ENCODE measurements at regions of chr9 and their contacts with region 1.

Region 1: DNA sequence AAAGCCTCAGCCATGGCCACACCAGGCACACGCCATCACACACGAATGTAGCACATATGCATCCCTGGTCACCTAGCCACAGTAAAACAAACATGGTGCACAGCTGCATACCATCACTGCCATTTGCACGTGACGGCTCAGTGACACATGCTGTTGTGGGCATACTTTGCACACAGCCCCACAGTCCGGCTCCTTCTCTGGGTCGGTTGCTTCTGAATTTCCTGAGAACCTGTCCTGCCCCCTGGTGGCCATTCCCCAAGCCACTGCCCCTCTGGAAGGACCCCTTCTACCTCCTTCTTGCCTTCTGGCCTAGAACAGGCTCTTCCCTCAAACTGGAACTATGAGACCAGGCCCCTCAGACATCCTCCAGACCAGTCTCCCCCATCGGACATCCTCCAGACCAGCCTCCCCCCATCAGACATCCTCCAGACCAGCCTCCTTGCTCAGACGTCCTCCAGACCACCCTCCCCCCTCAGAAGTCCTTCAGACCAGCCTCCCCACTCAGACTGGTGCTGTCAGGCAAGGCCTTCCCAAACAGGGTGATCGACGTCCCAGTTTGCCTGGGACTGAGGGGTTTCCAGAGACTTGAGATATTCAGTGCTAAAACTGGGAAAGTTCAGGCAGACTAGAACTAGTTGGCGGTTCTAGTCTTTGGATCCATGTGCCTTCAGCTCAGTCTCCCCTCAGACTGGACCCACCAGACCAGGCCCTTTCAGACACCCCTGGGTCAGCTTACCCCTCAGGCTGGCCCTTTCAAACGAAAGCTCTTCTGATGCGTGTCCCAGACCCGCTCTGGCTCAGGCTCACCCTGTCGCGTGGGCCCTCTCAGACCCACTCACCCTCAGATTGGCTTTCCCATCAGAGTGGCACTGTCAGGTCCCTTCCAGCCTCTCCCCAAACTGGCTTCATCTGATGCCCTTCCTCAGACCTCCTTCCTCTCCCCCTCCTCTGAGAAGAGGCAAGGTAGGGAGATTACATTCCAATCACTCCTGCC is 24.3 kb upstream of the ENHO start:
- DNase-seq: peak; percentile 65
- H3K4me3 ChIP-seq: peak overlapping the region in 1 of 2 experiments; percentile 40; a peak in 1 of 4 replicates
- H3K27ac ChIP-seq: peak overlapping the region in 1 of 2 experiments; percentile 74; a peak in 2 of 4 replicates
- H3K4me1 ChIP-seq: peaks cover 0 to 37% of the 10 kb centered on the region in 2 experiments; a peak in 1 of 4 replicates
- H3K27me3 ChIP-seq: peaks cover 5% of the 10 kb centered on the region; the same call in 1 of the 2 replicates
- CTCF ChIP-seq: peak; percentile 79
- EP300 ChIP-seq: no peak
- RAD21 ChIP-seq: peak; percentile 67

Region 2: GRCh38 chr9:34403554-34404380 is 143.4 kb before region 1 on chr9:
- CTCF ChIA-PET with region 1: interaction called, 49 read pairs
- POLR2A ChIA-PET with region 1: no interaction called
- DNase-seq: peak; percentile 78
- H3K4me3 ChIP-seq: peak overlapping the region in 1 of 2 experiments; percentile 44; a peak in 1 of 4 replicates
- H3K27ac ChIP-seq: no peak overlapping the region
- H3K4me1 ChIP-seq: peaks cover 0 to 12% of the 10 kb centered on the region in 2 experiments; a peak in 1 of 4 replicates
- H3K27me3 ChIP-seq: no peaks in the 10 kb centered on the region
- CTCF ChIP-seq: peak; percentile 99
- EP300 ChIP-seq: no peak
- RAD21 ChIP-seq: peak; percentile 99

Region 3: DNA sequence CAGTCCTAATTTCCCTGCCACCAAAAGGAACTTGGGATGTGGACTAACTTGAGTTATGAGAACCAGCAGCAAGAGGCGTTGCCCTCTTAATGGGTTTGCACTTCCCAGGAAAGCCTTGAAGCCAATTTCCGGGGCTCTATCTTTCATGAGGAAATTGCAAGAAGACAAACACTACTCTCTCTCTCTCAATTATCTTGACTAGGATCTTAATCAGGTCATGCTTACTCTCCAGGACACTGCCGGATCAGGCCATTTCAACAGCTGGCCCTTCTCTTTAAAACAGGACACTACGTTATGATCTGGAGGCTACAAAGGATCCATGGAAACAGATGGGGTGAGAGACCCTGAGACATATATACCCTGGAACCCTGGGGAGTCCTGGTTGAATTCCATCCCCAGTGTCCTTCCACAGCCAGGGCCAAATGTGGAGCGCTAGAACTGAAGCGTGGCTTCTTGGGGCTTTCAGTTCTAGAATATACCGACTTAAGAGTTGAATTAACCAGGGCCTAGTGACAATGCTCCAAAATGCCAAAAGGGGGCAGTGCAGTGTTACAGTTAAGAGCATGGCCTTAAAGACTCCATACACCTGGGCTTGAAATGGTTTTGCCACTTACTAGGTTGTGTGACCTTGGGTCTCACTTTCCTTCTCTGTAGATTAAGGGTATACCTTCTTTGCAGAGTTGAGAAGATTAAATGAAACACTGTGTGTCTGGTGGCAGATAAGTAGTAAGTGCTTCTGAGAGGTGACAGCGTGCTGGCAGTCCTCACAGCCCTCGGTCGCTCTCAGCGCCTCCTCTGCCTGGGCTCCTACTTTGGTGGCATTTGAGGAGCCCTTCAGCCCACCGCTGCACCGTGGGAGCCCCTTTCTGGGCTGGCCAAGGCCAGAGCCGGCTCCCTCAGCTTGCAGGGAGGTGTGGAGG is 109.9 kb before region 1 on chr9:
- CTCF ChIA-PET with region 1: interaction called, 27 read pairs
- POLR2A ChIA-PET with region 1: interaction called, 3 read pairs
- DNase-seq: peak; percentile 74
- H3K4me3 ChIP-seq: no peak overlapping the region
- H3K27ac ChIP-seq: peak overlapping the region in 1 of 2 experiments; percentile 59; a peak in 2 of 4 replicates
- H3K4me1 ChIP-seq: peaks cover 12 to 21% of the 10 kb centered on the region in 2 experiments; a peak in 3 of 4 replicates
- H3K27me3 ChIP-seq: no peaks in the 10 kb centered on the region
- CTCF ChIP-seq: peak; percentile 92
- EP300 ChIP-seq: no peak
- RAD21 ChIP-seq: peak; percentile 94

Region 4: GRCh38 chr9:34458013-34458958 is 88.8 kb before region 1 on chr9 and contains the starts of genes DNAI1 and FAM219A:
- CTCF ChIA-PET with region 1: interaction called, 13 read pairs
- POLR2A ChIA-PET with region 1: no interaction called
- DNase-seq: peak; percentile 99
- H3K4me3 ChIP-seq: peak within 1 kb of the TSS; percentile 76 to 77
- H3K27ac ChIP-seq: peak within 1 kb of the TSS; percentile 61 to 82
- H3K4me1 ChIP-seq: peaks cover 20 to 21% of the 10 kb centered on the region in 2 experiments; a peak in 2 of 4 replicates
- H3K27me3 ChIP-seq: no peaks in the 10 kb centered on the region
- CTCF ChIP-seq: no peak
- EP300 ChIP-seq: no peak
- RAD21 ChIP-seq: no peak
- polyA plus RNA-seq, gene DNAI1: 0.46 and 0.55 TPM in 2 replicates
- polyA plus RNA-seq, gene FAM219A: 15.7 and 18.5 TPM in 2 replicates

Region 5: DNA sequence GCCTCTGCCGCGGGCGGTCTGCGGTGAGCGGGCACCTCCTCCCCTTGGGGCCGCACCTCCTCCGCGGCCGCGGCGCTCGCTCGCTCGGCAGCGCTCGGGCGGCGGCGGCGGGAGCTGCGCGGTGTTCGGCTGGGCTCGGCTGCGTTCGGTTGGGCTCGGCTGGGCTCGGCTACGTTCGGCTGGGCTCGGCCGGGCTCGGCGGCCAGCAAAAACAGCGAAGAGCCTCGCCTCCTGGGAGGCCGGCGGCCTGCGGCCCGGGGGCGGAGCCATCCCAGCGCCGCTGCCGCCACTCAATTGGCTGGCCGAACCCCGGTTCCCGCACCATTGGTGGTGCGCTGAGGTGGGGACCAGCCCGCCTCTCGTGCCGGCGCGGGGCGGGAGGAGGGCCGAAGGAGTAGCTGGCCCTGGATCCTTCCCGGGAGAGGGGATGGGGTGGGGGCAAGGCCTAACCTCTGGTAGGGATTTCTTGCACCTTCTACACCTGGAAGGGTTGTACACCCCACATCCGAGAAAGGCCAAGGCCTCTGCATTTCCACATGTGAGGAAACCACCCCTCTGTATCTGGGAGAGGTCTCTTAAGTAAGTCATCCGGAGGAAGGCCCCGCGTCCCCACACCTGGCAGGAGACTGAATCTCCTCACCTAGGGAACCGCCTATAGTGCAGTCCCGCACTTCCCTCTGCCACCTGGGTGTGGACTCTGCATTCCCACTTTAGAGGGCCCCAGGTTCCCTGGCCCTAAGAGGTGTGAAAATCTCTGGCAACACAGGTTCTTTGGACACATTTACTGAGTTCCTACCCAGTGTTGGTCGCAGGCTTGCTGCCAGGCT is 23.9 kb before region 1 on chr9 and contains the start of gene ENHO:
- CTCF ChIA-PET with region 1: interaction called, 26 read pairs
- POLR2A ChIA-PET with region 1: no interaction called
- DNase-seq: peak; percentile 99
- H3K4me3 ChIP-seq: peak within 1 kb of the TSS; percentile 50 to 53
- H3K27ac ChIP-seq: peak within 1 kb of the TSS in 1 of 2 experiments; percentile 36; a peak in 1 of 4 replicates
- H3K4me1 ChIP-seq: peaks cover 0 to 15% of the 10 kb centered on the region in 2 experiments; a peak in 1 of 4 replicates
- H3K27me3 ChIP-seq: no peaks in the 10 kb centered on the region
- CTCF ChIP-seq: no peak
- EP300 ChIP-seq: no peak
- RAD21 ChIP-seq: no peak
- polyA plus RNA-seq, gene ENHO: 1.2 and 1.5 TPM in 2 replicates

Region 6: GRCh38 chr9:34578241-34579103 is 31.3 kb after region 1 on chr9:
- CTCF ChIA-PET with region 1: interaction called, 129 read pairs
- POLR2A ChIA-PET with region 1: no interaction called
- DNase-seq: peak; percentile 85
- H3K4me3 ChIP-seq: peak overlapping the region; percentile 26 to 35; a peak in 3 of 4 replicates
- H3K27ac ChIP-seq: peak overlapping the region in 1 of 2 experiments; percentile 75; a peak in 2 of 4 replicates
- H3K4me1 ChIP-seq: peaks cover 0 to 86% of the 10 kb centered on the region in 2 experiments; a peak in 2 of 4 replicates
- H3K27me3 ChIP-seq: peaks cover 33% of the 10 kb centered on the region
- CTCF ChIP-seq: no peak
- EP300 ChIP-seq: no peak
- RAD21 ChIP-seq: no peak

Region 7: DNA sequence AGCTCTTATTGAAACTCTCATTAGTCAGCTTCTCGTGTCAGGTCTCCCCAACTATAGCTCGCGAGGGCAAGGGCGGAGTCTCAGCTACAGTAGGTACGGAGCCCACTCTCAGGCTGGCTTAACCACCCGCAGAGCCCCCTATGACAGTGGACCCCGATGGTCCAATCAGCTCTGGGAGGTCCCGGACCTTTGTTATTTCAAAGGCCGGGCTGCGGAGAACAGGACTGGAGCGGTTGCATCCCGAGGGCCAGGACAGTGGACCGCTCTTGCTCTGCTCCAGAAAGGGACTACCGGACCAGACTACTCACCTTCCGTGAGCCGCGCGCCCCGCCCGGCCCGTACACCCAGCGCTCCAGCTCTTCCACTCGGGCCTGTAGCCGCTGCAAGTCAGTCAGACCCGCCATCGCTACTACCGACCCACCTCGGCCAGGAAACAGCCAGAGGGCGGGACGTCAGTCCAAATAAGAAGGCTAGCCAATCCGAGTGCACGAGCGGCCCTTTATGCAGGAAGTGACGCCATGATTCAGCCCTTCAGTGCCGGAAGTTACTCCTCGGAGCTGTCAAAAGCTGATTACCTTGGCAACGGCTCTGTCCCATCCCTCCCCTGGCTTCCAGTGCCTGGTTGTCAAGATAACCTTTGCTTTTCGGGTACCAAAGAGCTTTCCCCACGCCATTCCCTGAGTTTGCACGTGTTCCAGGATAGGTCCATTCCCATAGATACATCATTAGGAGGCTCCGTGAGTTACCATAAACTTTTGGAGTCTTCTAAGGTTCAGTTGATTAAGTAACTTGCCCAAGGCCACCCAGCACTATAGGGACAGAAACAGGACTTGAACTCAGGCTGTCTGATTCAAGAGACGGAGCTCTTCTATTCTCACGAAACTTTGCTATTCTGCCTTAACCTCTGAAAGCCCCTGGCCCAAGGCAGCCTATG is 73.2 kb after region 1 on chr9 and contains the start of gene DCTN3:
- CTCF ChIA-PET with region 1: interaction called, 11 read pairs
- POLR2A ChIA-PET with region 1: no interaction called
- DNase-seq: peak; percentile 97
- H3K4me3 ChIP-seq: peak within 1 kb of the TSS; percentile 94 to 96
- H3K27ac ChIP-seq: peak within 1 kb of the TSS in 1 of 2 experiments; percentile 13; a peak in 2 of 4 replicates
- H3K4me1 ChIP-seq: peaks cover 5 to 22% of the 10 kb centered on the region in 2 experiments; a peak in 2 of 4 replicates
- H3K27me3 ChIP-seq: no peaks in the 10 kb centered on the region
- CTCF ChIP-seq: no peak
- EP300 ChIP-seq: no peak
- RAD21 ChIP-seq: no peak
- polyA plus RNA-seq, gene DCTN3: 210 and 300 TPM in 2 replicates

Measured in SK-N-SH (cell line).